ENCODE measurements at regions of chr20 and their contacts with region 1.

Region 1: DNA sequence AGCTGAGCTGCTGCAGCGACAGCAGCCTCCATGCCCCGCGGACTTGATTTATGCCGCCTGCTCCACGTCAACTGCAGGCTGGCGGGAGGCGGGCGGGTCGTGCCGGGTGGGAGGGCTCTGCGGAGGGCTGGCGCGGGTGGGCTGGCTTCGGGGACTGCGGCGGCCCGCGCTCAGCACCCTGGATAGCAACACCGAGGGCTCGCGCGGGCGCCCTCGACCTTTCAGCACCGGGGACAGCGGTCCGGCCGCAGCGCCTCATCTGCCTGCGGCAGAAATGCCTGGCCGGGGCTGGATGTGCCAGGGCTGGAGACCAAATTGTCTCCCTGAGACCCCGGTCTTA is 792 bp downstream of the SNAP25 start:
- DNase-seq: peak; percentile 56 to 74
- ATAC-seq: peak; percentile 62 to 74
- H3K4me3 ChIP-seq: peak overlapping the region; percentile 70
- H3K27ac ChIP-seq: peak overlapping the region; percentile 77 to 93
- H3K4me1 ChIP-seq: peaks cover 63% of the 10 kb centered on the region
- CTCF ChIP-seq: no peak
- EP300 ChIP-seq: no peak
- POLR2A ChIP-seq: peak; percentile 14; the same call in 1 of the 2 replicates
- RAD21 ChIP-seq: peak; percentile 22 to 56; a peak in 4 of 5 replicates

Region 2: DNA sequence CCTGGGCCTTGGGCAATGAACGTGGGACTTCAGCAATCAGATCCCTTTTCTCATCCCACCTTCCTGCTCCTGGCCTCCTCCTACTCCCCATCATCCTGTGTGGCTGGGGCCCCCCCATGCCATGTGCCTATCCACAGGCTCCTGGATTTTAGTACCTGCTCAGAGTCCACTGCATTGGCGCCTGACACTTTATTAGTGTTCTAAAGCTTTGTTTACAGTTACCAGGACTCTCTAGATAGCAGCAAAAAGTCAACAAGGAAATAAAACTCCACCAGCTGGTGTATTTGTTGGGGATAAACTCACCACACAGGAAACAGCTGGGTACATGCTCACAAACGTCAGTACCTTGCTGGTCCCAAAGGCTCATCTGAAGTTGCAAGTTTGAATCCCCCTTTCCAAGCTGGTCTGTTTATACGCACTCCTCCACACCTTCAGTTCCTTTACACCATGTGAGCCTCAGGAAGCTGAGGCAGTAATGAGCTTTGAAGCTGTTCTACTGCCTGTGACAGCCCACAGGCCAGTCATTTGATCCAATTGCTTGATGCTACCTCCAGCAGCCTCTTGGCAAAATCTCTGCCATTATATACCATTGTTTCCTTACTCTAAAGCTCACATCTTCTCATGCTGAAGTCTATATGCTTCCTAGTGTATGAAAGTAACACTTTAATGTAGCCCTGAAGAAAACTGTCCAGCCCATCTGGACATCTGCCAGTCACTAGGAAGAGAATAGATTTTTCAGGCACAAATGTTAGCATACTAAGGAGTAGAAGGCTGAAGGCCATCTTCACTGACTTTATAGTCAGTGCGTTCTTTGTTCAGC is 108.1 kb before region 1 on chr20:
- CTCF ChIA-PET with region 1: no interaction called
- POLR2A ChIA-PET with region 1: no interaction called
- DNase-seq: no peak
- ATAC-seq: peak in 1 of 2 experiments; percentile 54; a peak in 4 of 6 replicates
- H3K4me3 ChIP-seq: no peak overlapping the region
- H3K27ac ChIP-seq: peak overlapping the region in 1 of 2 experiments; percentile 17; a peak in 3 of 6 replicates
- H3K4me1 ChIP-seq: peaks cover 3% of the 10 kb centered on the region; the same call in 1 of the 3 replicates
- CTCF ChIP-seq: no peak
- EP300 ChIP-seq: no peak
- POLR2A ChIP-seq: no peak
- RAD21 ChIP-seq: no peak

Region 3: GRCh38 chr20:10249048-10249770 is 29.8 kb after region 1 on chr20:
- CTCF ChIA-PET with region 1: no interaction called
- POLR2A ChIA-PET with region 1: interaction called, 15 read pairs
- DNase-seq: peak; percentile 51 to 94
- ATAC-seq: peak; percentile 35 to 58; a peak in 4 of 6 replicates
- H3K4me3 ChIP-seq: no peak overlapping the region
- H3K27ac ChIP-seq: peak overlapping the region; percentile 89 to 91
- H3K4me1 ChIP-seq: peaks cover 78% of the 10 kb centered on the region
- CTCF ChIP-seq: no peak
- EP300 ChIP-seq: peak; percentile 85 to 92; a peak in 3 of 5 replicates
- POLR2A ChIP-seq: no peak
- RAD21 ChIP-seq: peak; percentile 37 to 59

Region 4: GRCh38 chr20:10271494-10272219 is 52.2 kb after region 1 on chr20:
- CTCF ChIA-PET with region 1: no interaction called
- POLR2A ChIA-PET with region 1: no interaction called
- DNase-seq: no peak
- ATAC-seq: no peak
- H3K4me3 ChIP-seq: no peak overlapping the region
- H3K27ac ChIP-seq: peak overlapping the region in 1 of 2 experiments; percentile 32; a peak in 2 of 6 replicates
- H3K4me1 ChIP-seq: 0 out of 3 replicates have a peak, but pooled peaks cover 4% of the 10 kb centered on the region
- CTCF ChIP-seq: no peak
- EP300 ChIP-seq: no peak
- POLR2A ChIP-seq: no peak
- RAD21 ChIP-seq: no peak

Measured in A549 (cell line).